Esophagus muscularis mucosa (tissue), 4 donors: ENCODE measurements at regions of chr11 and their contacts with region 1.

Region 1: GRCh38 chr11:70270104-70270876 is at the start of gene PPFIA1:
- DNase-seq: peak; percentile 97
- H3K4me3 ChIP-seq: peak within 1 kb of the TSS; percentile 72 to 99 (median 86)
- H3K27ac ChIP-seq: peak within 1 kb of the TSS; percentile 80 to 95 (median 90)
- H3K4me1 ChIP-seq: peaks cover 16 to 50% (median 37%) of the 10 kb centered on the region in 4 donors
- H3K27me3 ChIP-seq: no peaks in the 10 kb centered on the region
- CTCF ChIP-seq: no peak
- EP300 ChIP-seq: no peak
- POLR2A ChIP-seq: peak; percentile 16
- total RNA-seq, gene PPFIA1: 46.3 to 51.5 (median 47.2) TPM

Region 2: DNA sequence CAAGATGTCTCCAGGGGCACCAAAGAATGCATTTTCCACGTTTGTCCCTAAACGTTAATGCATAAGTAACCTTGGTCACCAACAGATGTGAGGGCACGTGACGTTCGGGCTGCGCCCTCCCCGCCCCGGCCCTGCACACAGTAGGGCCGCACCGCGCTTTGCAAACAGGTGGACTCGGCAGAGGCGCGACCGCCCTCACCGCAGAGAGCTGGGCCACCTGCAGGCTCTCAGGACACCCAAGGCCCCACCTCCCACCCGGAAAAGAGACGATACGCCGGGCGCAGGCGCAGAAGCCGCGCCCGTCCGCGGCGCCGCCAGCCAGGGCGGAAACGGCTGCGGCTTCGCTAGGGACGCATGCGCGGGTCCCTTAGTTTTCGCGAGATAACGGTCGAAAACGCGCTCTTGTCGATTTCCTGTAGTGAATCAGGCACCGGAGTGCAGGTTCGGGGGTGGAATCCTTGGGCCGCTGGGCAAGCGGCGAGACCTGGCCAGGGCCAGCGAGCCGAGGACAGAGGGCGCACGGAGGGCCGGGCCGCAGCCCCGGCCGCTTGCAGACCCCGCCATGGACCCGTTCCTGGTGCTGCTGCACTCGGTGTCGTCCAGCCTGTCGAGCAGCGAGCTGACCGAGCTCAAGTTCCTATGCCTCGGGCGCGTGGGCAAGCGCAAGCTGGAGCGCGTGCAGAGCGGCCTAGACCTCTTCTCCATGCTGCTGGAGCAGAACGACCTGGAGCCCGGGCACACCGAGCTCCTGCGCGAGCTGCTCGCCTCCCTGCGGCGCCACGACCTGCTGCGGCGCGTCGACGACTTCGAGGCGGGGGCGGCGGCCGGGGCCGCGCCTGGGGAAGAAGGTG is 67.2 kb before region 1 on chr11 and contains the start of gene FADD:
- intact Hi-C with region 1: loop called (anchors 5 kb)
- DNase-seq: peak; percentile 96
- H3K4me3 ChIP-seq: peak within 1 kb of the TSS; percentile 79 to 96 (median 92)
- H3K27ac ChIP-seq: peak within 1 kb of the TSS; percentile 85 to 96 (median 91)
- H3K4me1 ChIP-seq: peaks cover 22 to 39% (median 25%) of the 10 kb centered on the region in 4 donors
- H3K27me3 ChIP-seq: peaks cover 0 to 12% (median 0%) of the 10 kb centered on the region in 4 donors
- CTCF ChIP-seq: peak in 1 of 3 experiments; percentile 11
- EP300 ChIP-seq: no peak
- POLR2A ChIP-seq: peak; percentile 52
- total RNA-seq, gene FADD: 14.5 to 33.3 (median 21.5) TPM

Region 3: GRCh38 chr11:70399681-70400112 is 129.4 kb after region 1 on chr11:
- intact Hi-C with region 1: loop called (anchors 5 kb)
- DNase-seq: peak; percentile 96
- H3K4me3 ChIP-seq: peak overlapping the region; percentile 86 to 99 (median 96)
- H3K27ac ChIP-seq: peak overlapping the region; percentile 90 to 96 (median 93)
- H3K4me1 ChIP-seq: peaks cover 21 to 62% (median 54%) of the 10 kb centered on the region in 4 donors
- H3K27me3 ChIP-seq: no peaks in the 10 kb centered on the region
- CTCF ChIP-seq: no peak
- EP300 ChIP-seq: no peak
- POLR2A ChIP-seq: no peak

Region 4: DNA sequence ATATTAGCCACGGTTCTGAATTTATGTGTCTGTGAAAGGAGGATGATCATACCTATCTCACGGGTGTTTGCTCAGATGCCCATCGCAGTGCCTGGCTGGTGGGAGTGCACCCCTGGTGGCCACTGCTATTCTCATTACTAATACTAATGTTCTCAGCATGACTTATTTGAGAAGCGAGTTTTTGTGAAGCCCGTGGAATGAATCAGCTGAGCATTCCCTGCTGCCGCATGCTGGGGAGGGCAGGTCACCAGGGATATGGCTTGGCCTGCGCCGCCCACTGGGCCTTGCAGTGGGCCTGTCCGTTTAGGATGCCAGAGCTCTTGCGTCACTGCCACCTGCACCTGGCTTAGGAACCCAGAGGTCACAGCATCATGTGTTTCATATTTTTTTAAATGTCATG is 144.9 kb after region 1 on chr11:
- intact Hi-C with region 1: no loop called
- DNase-seq: no peak
- H3K4me3 ChIP-seq: no peak overlapping the region
- H3K27ac ChIP-seq: peak overlapping the region in 1 of 4 donors; percentile 60
- H3K4me1 ChIP-seq: peaks cover 0 to 10% (median 0%) of the 10 kb centered on the region in 4 donors
- H3K27me3 ChIP-seq: no peaks in the 10 kb centered on the region
- CTCF ChIP-seq: peak in 1 of 3 experiments; percentile 2
- EP300 ChIP-seq: no peak
- POLR2A ChIP-seq: no peak